Heart left ventricle (tissue), 16 donors: ENCODE measurements at regions of chr2 and their contacts with region 1.

Region 1: GRCh38 chr2:61888267-61889055 is at the start of gene CCT4:
- DNase-seq: peak; percentile 87 to 95 (median 91)
- ATAC-seq: peak; percentile 78 to 93 (median 90)
- H3K4me3 ChIP-seq: peak within 1 kb of the TSS; percentile 53 to 95 (median 84)
- H3K27ac ChIP-seq: peak within 1 kb of the TSS; percentile 85 to 99 (median 96)
- H3K4me1 ChIP-seq: peaks cover 4 to 25% (median 14%) of the 10 kb centered on the region in 12 donors
- H3K27me3 ChIP-seq: no peaks in the 10 kb centered on the region
- CTCF ChIP-seq: peak in 1 of 12 donors; percentile 8
- POLR2A ChIP-seq: peak in 1 of 2 donors; percentile 82
- total RNA-seq, gene CCT4: 50.1 to 130 (median 96.9) TPM

Region 2: DNA sequence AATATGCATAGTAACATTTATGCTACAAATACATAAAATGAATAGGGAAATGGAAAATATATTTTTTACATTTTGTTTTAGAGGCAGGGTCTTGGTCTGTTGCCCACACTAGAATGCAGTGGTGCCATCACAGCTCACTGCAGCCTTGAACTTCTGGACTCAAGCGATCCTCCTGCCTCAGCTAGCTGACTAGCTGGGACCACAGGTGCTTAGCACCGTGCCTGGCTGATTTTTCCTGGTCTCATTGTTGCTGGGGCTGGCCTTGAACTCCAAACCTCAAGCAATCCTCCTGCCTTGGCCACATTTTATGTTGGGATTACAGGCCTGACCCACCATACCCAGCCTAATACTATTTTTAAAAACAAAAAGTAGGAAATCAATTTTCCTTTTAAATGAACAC is 383.5 kb before region 1 on chr2:
- intact Hi-C with region 1: loop called in 1 of 10 experiments (anchors 10 kb)
- DNase-seq: no peak
- ATAC-seq: no peak
- H3K4me3 ChIP-seq: no peak overlapping the region
- H3K27ac ChIP-seq: no peak overlapping the region
- H3K4me1 ChIP-seq: peaks cover 0 to 9% (median 0%) of the 10 kb centered on the region in 12 donors
- H3K27me3 ChIP-seq: no peaks in the 10 kb centered on the region
- CTCF ChIP-seq: no peak
- POLR2A ChIP-seq: no peak

Region 3: GRCh38 chr2:61854474-61855182 is 33.8 kb before region 1 on chr2:
- intact Hi-C with region 1: loop called in 1 of 10 experiments (anchors 1 kb)
- DNase-seq: peak; percentile 84 to 91 (median 89)
- ATAC-seq: peak; percentile 94 to 97 (median 96)
- H3K4me3 ChIP-seq: peak overlapping the region; percentile 55 to 88 (median 71)
- H3K27ac ChIP-seq: peak overlapping the region in 11 of 12 donors; percentile 62 to 87 (median 79)
- H3K4me1 ChIP-seq: peaks cover 0 to 17% (median 7%) of the 10 kb centered on the region in 12 donors
- H3K27me3 ChIP-seq: no peaks in the 10 kb centered on the region
- CTCF ChIP-seq: no peak
- POLR2A ChIP-seq: peak in 1 of 2 donors; percentile 15

Region 4: DNA sequence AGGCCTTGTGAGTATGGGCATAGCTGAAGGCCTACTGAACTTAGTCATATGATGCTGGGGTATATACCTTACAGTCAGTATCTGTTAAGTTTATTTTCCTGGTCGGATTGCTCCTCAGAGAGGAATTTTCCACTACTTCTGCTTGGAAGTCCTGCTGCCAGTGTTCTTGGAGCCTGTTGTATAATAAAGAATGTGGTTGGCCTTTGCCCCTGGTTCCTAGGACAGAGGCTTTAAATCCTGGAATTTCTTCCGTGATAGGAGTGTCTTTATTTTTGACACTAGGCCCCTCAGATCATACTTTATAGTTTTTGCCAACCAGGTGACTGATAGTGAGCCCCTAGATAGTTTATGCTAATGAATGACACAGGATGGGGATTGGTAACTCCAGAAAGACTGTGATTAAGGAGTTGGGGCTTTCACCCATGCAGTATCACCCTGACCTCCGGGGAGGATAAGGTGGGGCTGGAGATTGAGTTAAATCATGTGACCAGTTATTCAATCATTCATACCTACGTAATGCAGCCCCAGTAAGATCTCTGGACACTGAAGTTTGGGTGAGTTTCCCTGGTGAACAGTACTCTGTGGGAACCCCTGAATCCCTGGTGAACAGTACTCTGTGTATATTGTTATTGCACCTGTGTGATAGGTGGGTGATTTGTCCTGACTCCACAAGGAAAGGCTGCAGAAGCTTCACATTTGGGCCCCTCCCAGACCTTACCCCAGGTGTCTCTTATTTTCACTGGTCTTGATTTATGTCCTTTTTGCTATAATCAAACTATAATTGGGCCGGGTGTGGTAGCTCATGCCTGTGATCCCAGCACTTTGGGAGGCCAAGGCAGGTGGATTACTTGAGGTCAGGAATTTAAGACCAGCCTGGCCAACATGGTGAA is 73.9 kb after region 1 on chr2:
- intact Hi-C with region 1: no loop called
- DNase-seq: no peak
- ATAC-seq: peak in 1 of 4 donors; percentile 28
- H3K4me3 ChIP-seq: no peak overlapping the region
- H3K27ac ChIP-seq: peak overlapping the region in 4 of 12 donors; percentile 10 to 36 (median 16)
- H3K4me1 ChIP-seq: peaks cover 0 to 17% (median 9%) of the 10 kb centered on the region in 12 donors
- H3K27me3 ChIP-seq: no peaks in the 10 kb centered on the region
- CTCF ChIP-seq: no peak
- POLR2A ChIP-seq: no peak